Activated CD4-positive, alpha-beta T cell treated with anti-CD3 and anti-CD28 coated beads, Interleukin-2, amount 10 ng/mL, durations not matched to agents 24 days and 14 days (primary cell): ENCODE measurements at regions of chr2 and their contacts with region 1.

Region 1: GRCh38 chr2:10832203-10832936 is 19.8 kb upstream of the PDIA6 start:
- DNase-seq: peak; percentile 95
- H3K4me3 Mint-ChIP-seq: no peak overlapping the region
- H3K27ac Mint-ChIP-seq: no peak overlapping the region
- H3K4me1 Mint-ChIP-seq: peaks cover 2% of the 10 kb centered on the region
- H3K27me3 Mint-ChIP-seq: peaks cover 29% of the 10 kb centered on the region

Region 2: GRCh38 chr2:10792001-10792634 is 40.3 kb before region 1 on chr2:
- intact Hi-C with region 1: no loop called
- DNase-seq: no peak
- H3K4me3 Mint-ChIP-seq: no peak overlapping the region
- H3K27ac Mint-ChIP-seq: peak overlapping the region; percentile 17
- H3K4me1 Mint-ChIP-seq: peaks cover 11% of the 10 kb centered on the region
- H3K27me3 Mint-ChIP-seq: no peaks in the 10 kb centered on the region

Region 3: DNA sequence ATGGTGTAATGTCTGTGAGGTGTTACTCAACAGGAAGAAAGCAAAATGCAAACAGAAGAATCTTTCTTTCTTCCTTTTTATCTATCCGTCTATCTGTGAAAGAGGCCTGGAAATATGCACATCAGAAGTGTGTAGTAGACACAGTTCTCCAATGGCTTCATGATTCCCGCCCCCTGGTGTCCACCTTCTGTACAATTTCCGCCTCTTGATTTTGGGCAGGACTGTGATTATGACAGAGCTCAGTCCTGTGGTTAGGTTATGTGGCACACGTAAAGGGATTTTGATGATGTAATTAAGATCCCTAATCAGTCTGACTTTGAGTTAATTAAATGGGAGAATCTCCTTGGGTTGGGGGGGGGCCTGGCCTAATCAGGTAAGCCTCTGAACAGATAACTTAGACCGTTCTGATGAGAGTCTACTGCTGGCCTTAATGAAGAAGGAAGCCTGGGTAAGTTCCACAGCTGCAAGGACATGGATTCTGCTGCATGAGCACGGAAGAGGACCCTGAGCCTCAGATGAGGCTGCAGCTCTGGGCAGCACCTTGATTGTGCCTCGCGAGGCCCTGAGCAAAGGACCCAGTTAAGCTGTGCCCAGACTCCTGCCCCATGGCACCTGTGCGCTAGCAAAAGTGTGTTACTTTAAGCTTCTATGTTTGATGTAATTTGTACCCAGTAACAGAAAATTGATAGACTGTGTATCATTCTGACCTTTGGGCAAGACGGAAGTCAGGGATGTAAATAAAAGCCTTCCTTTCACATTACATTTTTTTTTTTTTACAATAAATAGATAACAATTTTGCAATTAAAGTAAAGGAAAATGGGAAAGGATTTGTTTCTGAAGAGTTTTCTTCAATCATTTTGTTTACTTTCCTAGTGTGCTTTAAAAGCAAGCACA is 68.1 kb after region 1 on chr2:
- intact Hi-C with region 1: loop called (anchors 5 kb)
- DNase-seq: no peak
- H3K4me3 Mint-ChIP-seq: no peak overlapping the region
- H3K27ac Mint-ChIP-seq: no peak overlapping the region
- H3K4me1 Mint-ChIP-seq: no peaks in the 10 kb centered on the region
- H3K27me3 Mint-ChIP-seq: peaks cover 16% of the 10 kb centered on the region

Region 4: GRCh38 chr2:11124503-11125068 is 292.2 kb after region 1 on chr2:
- intact Hi-C with region 1: loop called (anchors 1 kb)
- DNase-seq: peak; percentile 90
- H3K4me3 Mint-ChIP-seq: no peak overlapping the region
- H3K27ac Mint-ChIP-seq: no peak overlapping the region
- H3K4me1 Mint-ChIP-seq: peaks cover 6% of the 10 kb centered on the region
- H3K27me3 Mint-ChIP-seq: peaks cover 3% of the 10 kb centered on the region

Region 5: GRCh38 chr2:11457935-11458334 is 625.6 kb after region 1 on chr2:
- intact Hi-C with region 1: loop called (anchors 10 kb)
- DNase-seq: no peak
- H3K4me3 Mint-ChIP-seq: no peak overlapping the region
- H3K27ac Mint-ChIP-seq: peak overlapping the region; percentile 1
- H3K4me1 Mint-ChIP-seq: peaks cover 24% of the 10 kb centered on the region
- H3K27me3 Mint-ChIP-seq: no peaks in the 10 kb centered on the region

Region 6: GRCh38 chr2:11681722-11682589 is 849.6 kb after region 1 on chr2:
- intact Hi-C with region 1: loop called (anchors 5 kb)
- DNase-seq: peak; percentile 88
- H3K4me3 Mint-ChIP-seq: no peak overlapping the region
- H3K27ac Mint-ChIP-seq: no peak overlapping the region
- H3K4me1 Mint-ChIP-seq: peaks cover 5% of the 10 kb centered on the region
- H3K27me3 Mint-ChIP-seq: peaks cover 32% of the 10 kb centered on the region